ENCODE measurements at regions of chr13 and their contacts with region 1.

Region 1: DNA sequence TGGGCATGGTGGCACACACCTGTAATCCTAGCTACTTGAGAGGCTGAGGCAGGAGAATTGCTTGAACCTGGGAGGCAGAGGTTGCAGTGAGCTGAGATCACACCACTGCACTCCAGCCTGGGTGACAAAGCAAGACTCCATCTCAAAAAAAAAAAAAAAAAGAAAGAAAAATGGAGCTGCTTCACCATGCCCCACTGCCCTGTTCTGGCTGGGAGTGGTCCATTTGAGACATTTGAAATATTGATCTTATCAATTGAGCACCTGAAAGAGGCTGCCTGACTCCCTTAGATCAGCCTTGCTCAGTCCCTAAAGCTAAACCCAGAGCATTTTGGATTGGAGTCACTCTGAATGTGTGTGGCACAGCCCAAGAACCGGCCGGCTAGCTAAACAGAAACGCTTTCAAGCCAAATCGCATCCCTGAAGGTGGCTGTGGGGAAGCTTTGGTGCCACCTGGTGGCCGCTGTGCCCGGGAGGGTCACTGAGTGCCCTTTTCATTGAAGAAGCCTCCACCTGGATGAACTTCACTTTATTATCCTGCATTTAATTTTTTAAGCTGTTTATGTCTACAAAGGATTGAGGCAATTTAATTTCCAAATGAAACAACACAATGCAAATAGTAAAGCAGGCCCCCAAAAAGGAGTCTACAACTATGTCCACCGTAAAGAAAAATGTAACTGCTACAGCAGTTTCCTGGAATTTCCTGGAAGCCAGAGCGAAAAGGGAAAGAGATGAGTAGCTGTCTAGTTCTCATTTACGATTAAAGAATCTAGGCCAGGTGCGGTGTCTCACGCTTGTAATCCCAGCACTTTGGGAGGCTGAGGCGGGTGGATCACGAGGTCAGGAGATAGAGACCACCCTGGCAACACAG is 53.1 kb upstream of the SERPINE3 start:
- DNase-seq: peak; percentile 55 to 95
- H3K4me3 ChIP-seq: no peak overlapping the region
- CTCF ChIP-seq: peak in 1 of 3 donors; percentile 63
- POLR2A ChIP-seq: no peak

Region 2: GRCh38 chr13:50334115-50334778 is 952.1 kb before region 1 on chr13:
- intact Hi-C with region 1: no loop called
- DNase-seq: no peak
- H3K4me3 ChIP-seq: no peak overlapping the region
- CTCF ChIP-seq: no peak
- POLR2A ChIP-seq: no peak

Region 3: DNA sequence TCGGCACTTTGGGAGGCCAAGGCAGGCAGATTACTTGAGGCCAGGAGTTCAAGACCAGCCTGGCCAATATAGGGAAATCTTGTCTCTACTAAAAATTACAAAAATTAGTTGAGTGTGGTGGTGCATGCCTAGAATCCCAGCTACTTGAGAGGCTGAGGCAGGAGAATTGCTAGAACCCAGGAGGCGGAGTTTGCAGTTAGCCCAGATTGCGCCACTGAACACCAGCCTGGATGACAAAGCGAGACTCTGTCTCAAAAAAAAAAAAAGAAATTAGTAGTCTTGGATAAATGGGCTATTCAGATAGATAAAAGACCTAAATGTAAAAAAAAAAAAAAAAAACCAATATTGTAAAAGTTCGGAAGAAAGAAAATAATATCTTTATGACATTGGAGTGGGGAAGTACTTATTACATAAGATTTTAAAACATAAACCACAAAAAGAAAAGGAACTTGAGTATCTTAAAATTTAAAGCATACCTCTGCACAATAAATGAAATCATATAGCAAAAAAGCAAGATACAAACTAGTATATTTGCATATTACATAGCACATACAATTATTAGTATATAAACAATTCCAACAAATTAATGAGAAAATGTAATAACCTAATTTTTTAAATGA is 403.4 kb before region 1 on chr13:
- intact Hi-C with region 1: no loop called
- DNase-seq: no peak
- H3K4me3 ChIP-seq: no peak overlapping the region
- CTCF ChIP-seq: no peak
- POLR2A ChIP-seq: no peak

Region 4: GRCh38 chr13:50911937-50912795 is 374.2 kb before region 1 on chr13:
- intact Hi-C with region 1: no loop called
- DNase-seq: peak; percentile 82 to 98
- H3K4me3 ChIP-seq: no peak overlapping the region
- CTCF ChIP-seq: no peak
- POLR2A ChIP-seq: no peak

Region 5: DNA sequence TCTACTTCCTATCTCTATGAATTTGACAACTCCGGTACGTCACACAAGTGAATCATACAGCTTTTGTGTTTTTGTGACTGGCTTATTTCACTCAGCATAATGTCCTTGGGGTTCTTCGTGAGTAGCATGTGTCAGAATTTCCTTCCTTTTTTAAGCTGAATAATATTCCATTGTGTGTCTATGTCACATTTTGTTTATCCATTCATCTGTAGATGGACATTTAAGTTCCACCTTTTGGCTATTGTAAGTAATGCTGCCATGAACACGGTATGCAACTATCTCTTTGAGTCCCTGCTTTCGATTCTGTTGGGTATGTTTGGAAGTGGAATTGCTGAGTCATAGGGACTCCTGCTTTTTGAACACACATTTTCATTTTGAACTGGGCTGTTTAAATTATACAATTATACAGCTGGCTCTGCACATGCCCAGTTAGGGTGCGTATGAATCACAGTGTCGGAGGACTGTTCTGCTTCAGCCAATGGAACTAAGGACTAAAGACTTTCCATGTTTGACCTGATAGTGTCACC is 132.3 kb before region 1 on chr13:
- intact Hi-C with region 1: loop called (anchors 10 kb)
- DNase-seq: no peak
- H3K4me3 ChIP-seq: no peak overlapping the region
- CTCF ChIP-seq: no peak
- POLR2A ChIP-seq: no peak

Region 6: DNA sequence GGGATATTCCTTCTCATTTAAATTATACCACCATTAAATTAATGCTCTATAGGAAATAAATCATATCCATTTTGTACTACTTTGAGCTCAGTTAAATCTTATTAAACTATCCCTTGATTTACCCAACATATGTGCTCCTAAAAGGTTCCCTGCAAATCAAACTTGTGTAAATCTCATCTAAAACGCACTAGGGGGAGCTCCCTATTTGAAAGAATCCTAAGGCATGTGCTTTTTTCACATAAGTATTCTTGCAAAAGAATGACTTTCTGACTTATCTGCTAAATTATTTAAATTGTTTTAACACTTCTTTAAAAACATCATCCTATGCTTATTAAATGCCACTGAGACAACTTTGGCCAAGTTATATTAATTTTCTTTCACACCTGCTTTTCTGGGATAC is 158.6 kb after region 1 on chr13:
- intact Hi-C with region 1: no loop called
- DNase-seq: no peak
- H3K4me3 ChIP-seq: no peak overlapping the region
- CTCF ChIP-seq: no peak
- POLR2A ChIP-seq: no peak

Region 7: DNA sequence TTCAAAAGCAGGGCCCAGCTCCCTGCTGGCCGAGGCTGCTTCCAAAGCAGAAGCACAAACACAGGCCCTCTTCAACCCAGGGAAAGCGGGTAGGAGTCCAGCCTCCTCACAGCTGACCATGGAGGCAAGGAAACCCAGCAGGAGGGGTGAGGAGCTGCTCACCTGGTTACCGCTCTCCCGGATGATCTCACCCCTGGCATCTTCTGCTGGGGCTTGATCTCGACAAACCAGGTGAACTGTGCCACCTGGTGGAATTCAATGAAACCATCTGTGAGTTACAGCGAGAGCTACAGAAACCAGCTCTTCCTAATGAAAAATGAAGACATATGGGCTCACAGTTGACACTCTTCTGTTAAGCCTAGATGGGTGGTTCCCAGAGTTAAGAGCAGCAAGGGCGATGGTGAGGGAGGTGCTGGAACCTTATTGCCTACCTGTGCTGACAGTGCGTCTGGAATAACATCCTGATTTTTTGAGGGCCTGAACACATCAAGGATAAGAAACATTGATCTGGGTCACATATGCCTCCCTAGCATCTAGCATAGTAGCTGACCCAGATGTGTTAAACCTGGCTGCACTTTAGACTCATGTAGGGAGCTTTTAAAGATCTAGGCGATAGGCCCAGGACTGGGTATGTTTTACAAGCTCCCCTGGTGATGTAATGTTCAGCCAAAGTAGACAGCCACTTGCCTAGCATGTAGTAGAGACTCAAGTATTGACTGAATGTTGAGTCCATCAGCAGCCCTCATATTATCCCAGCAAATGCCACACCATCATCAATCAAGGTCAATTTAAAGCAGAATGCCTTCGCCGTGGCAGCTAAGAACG is 511.5 kb after region 1 on chr13:
- intact Hi-C with region 1: loop called (anchors 10 kb)
- DNase-seq: no peak
- H3K4me3 ChIP-seq: no peak overlapping the region
- CTCF ChIP-seq: no peak
- POLR2A ChIP-seq: no peak